HCT116 (cell line): ENCODE measurements at regions of chr12 and their contacts with region 1.

Region 1: GRCh38 chr12:7460375-7461259 is 16.7 kb upstream of the CD163L1 start:
- DNase-seq: peak; percentile 34
- ATAC-seq: peak; percentile 95
- H3K4me3 ChIP-seq: no peak overlapping the region
- H3K27ac ChIP-seq: no peak overlapping the region
- H3K4me1 ChIP-seq: no peaks in the 10 kb centered on the region
- H3K27me3 ChIP-seq: no peaks in the 10 kb centered on the region
- CTCF ChIP-seq: peak; percentile 79 to 92 (median 89); a peak in 5 of 6 replicates
- POLR2A ChIP-seq: no peak
- RAD21 ChIP-seq: peak; percentile 91

Region 2: GRCh38 chr12:7142056-7142644 is 318.5 kb before region 1 on chr12:
- CTCF ChIA-PET with region 1: no interaction called
- POLR2A ChIA-PET with region 1: no interaction called
- RAD21 ChIA-PET with region 1: no interaction called
- intact Hi-C with region 1: loop called (anchors 1 kb)
- DNase-seq: no peak
- ATAC-seq: peak; percentile 93
- H3K4me3 ChIP-seq: no peak overlapping the region
- H3K27ac ChIP-seq: no peak overlapping the region
- H3K4me1 ChIP-seq: no peaks in the 10 kb centered on the region
- H3K27me3 ChIP-seq: no peaks in the 10 kb centered on the region
- CTCF ChIP-seq: peak; percentile 68 to 91 (median 86); a peak in 5 of 6 replicates
- POLR2A ChIP-seq: no peak
- RAD21 ChIP-seq: peak; percentile 59

Region 3: GRCh38 chr12:7219599-7220243 is 240.9 kb before region 1 on chr12:
- CTCF ChIA-PET with region 1: interaction called, 3 read pairs
- POLR2A ChIA-PET with region 1: no interaction called
- RAD21 ChIA-PET with region 1: no interaction called
- intact Hi-C with region 1: loop called (anchors 1 kb)
- DNase-seq: peak; percentile 75
- ATAC-seq: peak; percentile 82
- H3K4me3 ChIP-seq: no peak overlapping the region
- H3K27ac ChIP-seq: no peak overlapping the region
- H3K4me1 ChIP-seq: no peaks in the 10 kb centered on the region; a peak in 1 of 4 replicates
- H3K27me3 ChIP-seq: no peaks in the 10 kb centered on the region
- CTCF ChIP-seq: peak; percentile 82 to 95 (median 93)
- POLR2A ChIP-seq: no peak
- RAD21 ChIP-seq: peak; percentile 98

Region 4: DNA sequence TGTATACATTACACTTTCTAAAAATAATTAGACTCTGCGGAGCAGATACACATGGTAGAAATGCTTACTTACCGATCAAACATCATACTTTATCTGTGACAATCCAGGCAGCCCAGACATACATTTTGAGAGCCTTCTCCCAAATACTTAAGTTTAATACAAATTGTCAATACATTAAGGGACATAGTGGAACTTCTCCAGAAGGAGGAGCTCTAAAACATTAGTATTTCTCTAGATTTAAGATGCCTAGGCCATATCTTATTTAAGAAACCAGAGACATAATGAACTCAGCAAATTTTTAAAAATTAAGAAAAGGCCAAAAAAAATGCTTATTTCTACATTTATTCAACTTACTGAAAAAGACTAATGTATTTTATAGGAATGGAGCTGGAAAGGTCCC is 140.7 kb before region 1 on chr12:
- CTCF ChIA-PET with region 1: no interaction called
- POLR2A ChIA-PET with region 1: no interaction called
- RAD21 ChIA-PET with region 1: no interaction called
- intact Hi-C with region 1: loop called (anchors 5 kb)
- DNase-seq: no peak
- ATAC-seq: no peak
- H3K4me3 ChIP-seq: no peak overlapping the region
- H3K27ac ChIP-seq: no peak overlapping the region
- H3K4me1 ChIP-seq: no peaks in the 10 kb centered on the region
- H3K27me3 ChIP-seq: no peaks in the 10 kb centered on the region
- CTCF ChIP-seq: no peak; a peak in 1 of 6 replicates
- POLR2A ChIP-seq: no peak
- RAD21 ChIP-seq: peak; percentile 18; the same call in 1 of the 2 replicates

Region 5: GRCh38 chr12:7374423-7375144 is 86.0 kb before region 1 on chr12:
- CTCF ChIA-PET with region 1: no interaction called
- POLR2A ChIA-PET with region 1: no interaction called
- RAD21 ChIA-PET with region 1: no interaction called
- intact Hi-C with region 1: loop called (anchors 1 kb)
- DNase-seq: peak; percentile 47
- ATAC-seq: peak; percentile 96
- H3K4me3 ChIP-seq: no peak overlapping the region
- H3K27ac ChIP-seq: no peak overlapping the region
- H3K4me1 ChIP-seq: peaks cover 2 to 16% of the 10 kb centered on the region in 2 experiments; a peak in 2 of 4 replicates
- H3K27me3 ChIP-seq: no peaks in the 10 kb centered on the region
- CTCF ChIP-seq: peak; percentile 59 to 82 (median 78); a peak in 5 of 6 replicates
- POLR2A ChIP-seq: no peak
- RAD21 ChIP-seq: peak; percentile 77